Activated CD4-positive, alpha-beta memory T cell treated with anti-CD3 and anti-CD28 coated beads, Interleukin-2, amount 10 ng/mL, durations not matched to agents 7 days and 5 days (primary cell): ENCODE measurements at regions of chr1 and their contacts with region 1.

Region 1: GRCh38 chr1:66446261-66447001 is 87.5 kb upstream of the SGIP1 start:
- DNase-seq: peak; percentile 31
- H3K4me3 Mint-ChIP-seq: peak overlapping the region; percentile 75
- H3K27ac Mint-ChIP-seq: peak overlapping the region; percentile 93
- H3K4me1 Mint-ChIP-seq: peaks cover 29% of the 10 kb centered on the region
- H3K27me3 Mint-ChIP-seq: peaks cover 18% of the 10 kb centered on the region

Region 2: DNA sequence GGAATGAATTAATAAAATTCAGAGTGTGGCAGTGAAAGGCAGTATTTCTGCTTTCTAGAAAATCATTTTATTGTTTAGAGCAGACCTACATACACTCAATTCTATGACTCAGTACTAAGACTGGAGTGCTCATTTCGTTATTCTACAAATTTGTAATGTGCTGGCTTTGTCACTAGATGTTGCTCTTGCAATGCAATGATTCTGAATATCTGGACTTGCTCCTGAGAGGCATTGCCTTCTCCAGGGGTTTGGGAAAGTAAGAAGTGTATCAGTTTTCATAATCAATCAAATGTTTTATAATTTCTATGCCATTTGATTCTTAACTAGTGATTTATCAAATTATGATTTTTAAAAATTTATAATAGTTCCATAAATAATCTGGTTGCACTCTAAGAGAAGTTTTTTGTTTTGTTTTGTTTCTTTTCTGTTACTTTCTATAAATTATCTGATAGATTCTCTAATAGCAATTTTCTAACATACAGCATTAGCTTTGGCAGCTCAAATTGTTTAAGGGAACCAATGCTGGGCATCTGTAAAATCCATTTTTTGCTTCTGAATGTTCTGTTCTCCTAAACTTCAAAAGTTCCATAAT is 193.0 kb before region 1 on chr1:
- CTCF ChIA-PET with region 1: interaction called, 422 read pairs
- POLR2A ChIA-PET with region 1: interaction called, 72 read pairs
- DNase-seq: no peak
- H3K4me3 Mint-ChIP-seq: no peak overlapping the region
- H3K27ac Mint-ChIP-seq: no peak overlapping the region
- H3K4me1 Mint-ChIP-seq: peaks cover 74% of the 10 kb centered on the region
- H3K27me3 Mint-ChIP-seq: no peaks in the 10 kb centered on the region

Region 3: DNA sequence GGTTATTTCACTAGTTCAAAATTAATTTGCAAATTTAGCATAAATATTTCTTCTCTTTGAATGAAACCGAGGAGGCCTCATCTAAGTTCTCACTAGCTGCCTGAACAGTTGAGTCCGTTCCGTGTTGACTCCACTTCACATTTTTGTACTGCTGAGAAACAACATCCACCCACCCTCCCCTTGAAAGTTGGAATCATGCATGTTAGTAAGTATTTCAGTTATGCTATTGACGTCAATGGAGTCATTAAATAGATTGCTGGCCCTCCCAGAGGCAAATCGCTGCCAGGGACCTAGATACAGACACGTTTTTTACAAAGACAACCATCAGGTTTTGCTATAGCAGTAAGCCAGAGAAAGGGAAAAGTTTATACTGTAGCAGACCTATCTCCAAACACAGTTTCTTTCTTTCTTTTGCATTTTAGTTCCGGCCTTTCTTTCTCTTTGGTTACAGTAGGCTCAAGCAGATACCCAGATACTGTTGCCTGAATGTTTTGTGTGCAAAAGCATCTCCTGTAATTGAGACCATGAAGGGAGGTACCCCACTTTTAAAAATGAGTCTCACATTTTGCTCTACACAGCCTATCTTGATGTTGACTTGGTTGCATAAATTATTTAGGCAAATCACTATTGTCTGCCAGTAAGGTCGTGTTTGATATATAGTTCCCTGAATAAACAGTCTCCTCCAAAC is 175.1 kb before region 1 on chr1:
- CTCF ChIA-PET with region 1: interaction called, 25 read pairs
- POLR2A ChIA-PET with region 1: interaction called, 6 read pairs
- DNase-seq: peak; percentile 34
- H3K4me3 Mint-ChIP-seq: no peak overlapping the region
- H3K27ac Mint-ChIP-seq: peak overlapping the region; percentile 57
- H3K4me1 Mint-ChIP-seq: peaks cover 61% of the 10 kb centered on the region
- H3K27me3 Mint-ChIP-seq: peaks cover 2% of the 10 kb centered on the region

Region 4: DNA sequence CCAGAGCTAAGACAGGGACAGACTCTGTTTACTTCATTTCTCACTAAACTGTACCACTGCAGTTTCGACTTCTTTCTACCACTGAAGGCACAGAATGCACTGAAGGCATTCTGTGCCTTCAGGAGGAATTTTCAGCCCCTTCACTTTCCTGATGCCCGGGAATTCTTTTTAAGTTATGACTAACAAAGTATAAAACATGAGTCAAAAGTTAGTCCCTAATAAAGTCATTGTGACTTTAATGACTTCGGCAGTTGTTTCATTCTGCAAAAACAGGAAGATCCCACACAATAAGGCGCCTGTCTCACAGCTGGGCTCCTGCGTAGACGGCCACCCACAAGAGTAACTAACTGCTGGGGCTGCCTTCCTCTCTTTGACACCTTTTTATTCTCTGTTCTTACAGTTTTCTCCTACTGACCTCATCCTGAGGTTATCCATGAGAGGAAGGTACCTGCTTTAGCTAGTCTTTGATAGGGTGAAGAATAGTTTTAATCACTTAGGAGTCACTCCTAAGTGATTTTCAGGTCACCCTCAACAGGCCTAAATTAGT is 96.4 kb before region 1 on chr1:
- CTCF ChIA-PET with region 1: interaction called, 14 read pairs
- POLR2A ChIA-PET with region 1: interaction called, 5 read pairs
- DNase-seq: peak; percentile 55
- H3K4me3 Mint-ChIP-seq: peak overlapping the region; percentile 66
- H3K27ac Mint-ChIP-seq: peak overlapping the region; percentile 80
- H3K4me1 Mint-ChIP-seq: peaks cover 94% of the 10 kb centered on the region
- H3K27me3 Mint-ChIP-seq: no peaks in the 10 kb centered on the region

Region 5: DNA sequence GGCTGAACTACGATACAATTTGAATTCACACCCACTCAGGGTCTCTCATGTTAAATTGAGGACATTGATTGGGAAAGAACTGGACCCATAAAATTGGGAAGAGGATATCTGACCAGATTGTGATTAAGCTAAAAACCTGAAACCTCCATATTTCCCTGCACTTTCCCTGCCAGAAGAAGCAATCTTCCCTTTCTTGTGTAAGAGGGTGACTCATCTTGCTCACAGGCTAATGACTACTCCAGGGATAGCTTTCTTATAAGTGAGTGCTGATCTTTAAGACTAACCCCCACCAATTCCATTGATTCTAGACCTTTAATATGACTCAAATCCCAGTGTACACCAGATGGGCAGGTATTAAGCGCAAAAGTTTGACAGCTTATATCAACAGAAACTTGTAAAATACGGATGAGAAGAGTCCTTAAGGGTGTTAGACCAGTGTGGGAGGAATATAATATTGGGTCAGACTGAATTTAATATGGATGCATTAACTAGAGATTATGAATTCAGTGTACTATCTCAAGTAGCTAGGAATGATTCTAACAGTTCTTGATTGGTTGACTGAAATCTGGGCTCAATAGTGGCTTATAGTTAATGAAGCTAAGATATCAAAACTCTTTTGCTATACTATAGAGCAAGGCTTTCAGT is 75.4 kb after region 1 on chr1:
- CTCF ChIA-PET with region 1: no interaction called
- POLR2A ChIA-PET with region 1: no interaction called
- DNase-seq: no peak
- H3K4me3 Mint-ChIP-seq: no peak overlapping the region
- H3K27ac Mint-ChIP-seq: no peak overlapping the region
- H3K4me1 Mint-ChIP-seq: no peaks in the 10 kb centered on the region
- H3K27me3 Mint-ChIP-seq: peaks cover 3% of the 10 kb centered on the region